CD4-positive, alpha-beta T cell (primary cell): ENCODE measurements at regions of chr6 and their contacts with region 1.

Region 1: DNA sequence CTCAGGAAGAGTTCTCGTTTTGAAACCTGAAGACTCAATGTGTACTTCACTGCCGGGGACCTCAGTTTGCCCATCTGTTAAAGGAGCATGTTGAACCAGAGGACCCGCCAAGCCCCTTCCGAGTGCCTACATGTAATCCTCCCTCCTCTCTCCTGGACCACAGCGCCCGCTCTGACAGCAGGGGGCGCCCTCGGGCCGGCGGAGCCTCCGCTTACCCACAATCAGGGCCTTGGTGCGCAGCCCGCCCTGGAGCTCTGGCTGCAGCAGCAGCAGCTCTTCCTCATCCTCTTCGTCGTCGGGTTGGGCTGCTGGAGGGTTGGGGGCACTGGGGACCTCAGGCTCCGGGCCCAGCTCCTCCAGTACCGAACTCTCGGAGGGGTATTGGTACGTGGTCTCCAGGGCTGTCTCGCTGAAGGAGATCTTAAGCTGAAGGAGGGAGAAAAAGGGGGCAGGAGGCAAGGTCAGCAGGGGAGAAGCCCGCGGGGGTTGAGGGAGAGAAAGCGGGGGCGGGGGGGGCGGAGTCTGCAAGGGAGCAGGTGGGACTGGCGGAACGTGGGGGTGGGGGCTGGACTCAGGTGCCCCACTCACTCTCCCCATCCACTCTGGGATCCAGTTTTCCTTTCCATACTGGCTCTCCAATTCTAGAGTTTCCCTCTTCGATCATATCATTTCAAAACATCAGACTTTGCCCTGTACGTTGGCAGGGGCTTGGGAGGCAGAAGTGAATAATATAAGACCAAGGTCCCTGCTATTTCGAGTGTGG is 6.3 kb upstream of the DHX16 start:
- DNase-seq: peak; percentile 84 to 96 (median 94)
- ATAC-seq: peak; percentile 41
- H3K4me3 ChIP-seq: peak overlapping the region; percentile 99
- H3K4me3 Mint-ChIP-seq: peak overlapping the region; percentile 98
- H3K27ac ChIP-seq: peak overlapping the region; percentile 41 to 98
- H3K27ac Mint-ChIP-seq: peak overlapping the region; percentile 94
- H3K4me1 ChIP-seq: peaks cover 49% of the 10 kb centered on the region
- H3K4me1 Mint-ChIP-seq: peaks cover 47% of the 10 kb centered on the region
- H3K27me3 ChIP-seq: no peaks in the 10 kb centered on the region
- H3K27me3 Mint-ChIP-seq: no peaks in the 10 kb centered on the region
- CTCF ChIP-seq: peak; percentile 91

Region 2: GRCh38 chr6:30711758-30712380 is 32.7 kb after region 1 on chr6:
- CTCF ChIA-PET with region 1: interaction called, 526 read pairs
- POLR2A ChIA-PET with region 1: interaction called, 381 read pairs
- intact Hi-C with region 1: no loop called
- DNase-seq: peak in 1 of 14 experiments; percentile 2
- ATAC-seq: no peak
- H3K4me3 ChIP-seq: no peak overlapping the region
- H3K4me3 Mint-ChIP-seq: no peak overlapping the region
- H3K27ac ChIP-seq: no peak overlapping the region
- H3K27ac Mint-ChIP-seq: no peak overlapping the region
- H3K4me1 ChIP-seq: peaks cover 9% of the 10 kb centered on the region
- H3K4me1 Mint-ChIP-seq: peaks cover 13% of the 10 kb centered on the region
- H3K27me3 ChIP-seq: no peaks in the 10 kb centered on the region
- H3K27me3 Mint-ChIP-seq: no peaks in the 10 kb centered on the region
- CTCF ChIP-seq: no peak

Region 3: GRCh38 chr6:30787954-30788353 is 108.8 kb after region 1 on chr6:
- CTCF ChIA-PET with region 1: no interaction called
- POLR2A ChIA-PET with region 1: no interaction called
- intact Hi-C with region 1: no loop called
- DNase-seq: peak in 2 of 14 experiments; percentile 32 to 50
- ATAC-seq: peak; percentile 49
- H3K4me3 ChIP-seq: no peak overlapping the region
- H3K4me3 Mint-ChIP-seq: peak overlapping the region; percentile 8
- H3K27ac ChIP-seq: no peak overlapping the region
- H3K27ac Mint-ChIP-seq: peak overlapping the region; percentile 61
- H3K4me1 ChIP-seq: peaks cover 46% of the 10 kb centered on the region
- H3K4me1 Mint-ChIP-seq: peaks cover 66% of the 10 kb centered on the region
- H3K27me3 ChIP-seq: no peaks in the 10 kb centered on the region
- H3K27me3 Mint-ChIP-seq: no peaks in the 10 kb centered on the region
- CTCF ChIP-seq: no peak

Region 4: GRCh38 chr6:30814136-30815040 is 135.2 kb after region 1 on chr6:
- CTCF ChIA-PET with region 1: no interaction called
- POLR2A ChIA-PET with region 1: no interaction called
- intact Hi-C with region 1: loop called in 1 of 2 experiments (anchors 5 kb)
- DNase-seq: peak in 12 of 14 experiments; percentile 16 to 76 (median 52)
- ATAC-seq: peak; percentile 84
- H3K4me3 ChIP-seq: no peak overlapping the region
- H3K4me3 Mint-ChIP-seq: peak overlapping the region; percentile 27
- H3K27ac ChIP-seq: peak overlapping the region in 1 of 2 donors; percentile 55
- H3K27ac Mint-ChIP-seq: peak overlapping the region; percentile 63
- H3K4me1 ChIP-seq: peaks cover 62% of the 10 kb centered on the region
- H3K4me1 Mint-ChIP-seq: peaks cover 63% of the 10 kb centered on the region
- H3K27me3 ChIP-seq: no peaks in the 10 kb centered on the region
- H3K27me3 Mint-ChIP-seq: no peaks in the 10 kb centered on the region
- CTCF ChIP-seq: no peak

Region 5: DNA sequence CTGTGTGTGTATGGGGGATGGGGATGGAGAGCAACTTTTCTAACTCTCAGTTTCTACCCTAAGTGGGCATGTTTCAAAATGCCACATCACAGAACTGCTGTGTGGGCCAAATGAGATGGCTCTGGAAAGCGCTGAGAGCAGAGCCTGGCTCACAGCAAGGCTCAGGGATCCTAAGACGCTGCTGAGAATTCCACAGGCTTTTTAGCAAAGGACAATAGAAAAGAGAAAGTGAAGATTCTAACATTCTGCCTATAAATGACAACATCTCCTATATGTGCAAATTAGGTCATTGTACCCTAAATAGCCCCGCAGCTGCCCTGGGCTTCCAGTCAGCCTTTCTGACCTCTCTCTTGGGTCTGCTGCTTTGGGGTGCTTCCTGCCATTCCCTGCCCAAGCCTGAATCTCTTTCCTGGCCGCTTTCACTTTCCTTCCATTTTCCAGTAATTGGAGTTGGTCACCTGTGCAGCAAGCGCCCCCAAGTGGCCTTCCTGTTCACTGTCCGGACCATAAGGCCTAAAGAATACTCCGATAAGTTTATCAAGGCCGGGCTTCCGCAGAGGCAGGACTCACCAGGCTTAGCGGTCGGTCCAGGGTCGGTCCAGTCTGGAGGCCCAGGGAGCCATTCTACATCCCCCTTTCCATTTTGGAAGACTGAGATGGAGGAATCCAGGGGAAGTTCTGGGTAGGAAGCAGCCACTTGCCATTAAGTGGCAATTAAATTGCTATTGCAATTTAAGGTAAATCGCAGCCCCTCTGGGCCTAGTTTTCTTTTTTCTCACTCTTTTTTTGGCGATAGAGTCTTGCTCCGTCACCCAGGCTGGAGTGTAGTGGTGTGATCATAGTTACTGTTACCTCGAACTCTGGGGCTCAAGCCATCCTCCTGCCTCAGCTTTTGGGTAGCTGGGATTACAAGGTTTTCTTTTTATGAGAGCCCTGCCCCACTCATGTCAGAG is 198.6 kb after region 1 on chr6:
- CTCF ChIA-PET with region 1: no interaction called
- POLR2A ChIA-PET with region 1: interaction called, 3 read pairs
- intact Hi-C with region 1: loop called in 1 of 2 experiments (anchors 1 kb)
- DNase-seq: peak; percentile 55 to 86 (median 71)
- ATAC-seq: peak; percentile 74
- H3K4me3 ChIP-seq: peak overlapping the region; percentile 48
- H3K4me3 Mint-ChIP-seq: peak overlapping the region; percentile 34
- H3K27ac ChIP-seq: no peak overlapping the region
- H3K27ac Mint-ChIP-seq: peak overlapping the region; percentile 1
- H3K4me1 ChIP-seq: peaks cover 13% of the 10 kb centered on the region
- H3K4me1 Mint-ChIP-seq: peaks cover 19% of the 10 kb centered on the region
- H3K27me3 ChIP-seq: no peaks in the 10 kb centered on the region
- H3K27me3 Mint-ChIP-seq: no peaks in the 10 kb centered on the region
- CTCF ChIP-seq: peak; percentile 91

Region 6: DNA sequence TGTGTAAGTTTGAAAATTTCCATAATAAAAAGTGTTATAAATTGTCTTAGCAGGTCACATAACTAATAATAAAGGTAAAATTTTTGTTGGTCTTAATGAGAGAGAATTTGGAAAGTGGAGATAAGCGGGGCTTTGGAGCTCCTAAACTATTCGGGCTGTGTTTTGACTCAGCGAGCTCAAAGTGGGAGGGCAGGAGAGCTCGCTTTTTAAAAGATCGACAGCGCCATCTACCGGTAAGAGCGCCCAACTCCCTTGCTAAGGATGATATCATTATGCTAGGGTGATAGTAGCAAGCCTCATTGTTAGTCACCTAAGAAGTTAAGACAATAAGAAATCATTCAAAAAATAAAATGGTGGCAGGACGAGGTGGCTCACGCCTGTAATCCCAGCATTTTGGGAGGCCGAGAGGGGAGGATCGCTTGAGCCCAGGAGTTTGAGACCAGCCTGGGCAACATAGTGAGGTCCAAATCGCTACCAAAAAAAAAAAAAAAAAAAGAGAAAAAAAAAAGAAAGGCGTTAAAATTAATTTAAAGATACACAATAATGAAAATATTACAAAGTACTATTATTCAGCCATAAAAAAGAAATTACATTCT is 408.4 kb after region 1 on chr6:
- CTCF ChIA-PET with region 1: interaction called, 6 read pairs
- POLR2A ChIA-PET with region 1: no interaction called
- intact Hi-C with region 1: loop called in 1 of 2 experiments (anchors 5 kb)
- DNase-seq: peak; percentile 77 to 96 (median 90)
- ATAC-seq: peak; percentile 99
- H3K4me3 ChIP-seq: no peak overlapping the region
- H3K4me3 Mint-ChIP-seq: no peak overlapping the region
- H3K27ac ChIP-seq: no peak overlapping the region
- H3K27ac Mint-ChIP-seq: no peak overlapping the region
- H3K4me1 ChIP-seq: peaks cover 10% of the 10 kb centered on the region
- H3K4me1 Mint-ChIP-seq: peaks cover 21% of the 10 kb centered on the region
- H3K27me3 ChIP-seq: no peaks in the 10 kb centered on the region
- H3K27me3 Mint-ChIP-seq: no peaks in the 10 kb centered on the region
- CTCF ChIP-seq: peak; percentile 74